ENCODE measurements at regions of chr1 and their contacts with region 1.

Region 1: DNA sequence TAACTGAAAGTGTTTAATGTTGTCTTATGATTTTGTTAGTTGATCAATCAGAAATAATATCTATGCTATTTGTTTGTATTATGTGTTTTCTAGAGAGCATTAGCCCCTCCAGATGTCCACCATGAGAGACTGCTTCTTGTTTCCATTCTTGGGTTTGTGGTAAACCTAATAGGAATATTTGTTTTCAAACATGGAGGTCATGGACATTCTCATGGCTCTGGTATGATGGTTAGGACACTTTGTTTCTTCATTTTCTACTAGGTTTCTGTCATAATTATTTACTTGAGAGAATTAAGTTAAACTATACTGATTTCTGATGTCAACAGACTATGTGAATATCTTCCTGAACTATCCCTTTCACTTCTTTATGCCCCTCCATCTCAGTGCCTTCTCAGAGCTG is 16.1 kb downstream of the SLC30A7 start:
- DNase-seq: no peak
- H3K4me3 ChIP-seq: no peak overlapping the region
- H3K27ac ChIP-seq: no peak overlapping the region
- H3K4me1 ChIP-seq: peaks cover 0 to 4% (median 0%) of the 10 kb centered on the region in 4 donors
- H3K27me3 ChIP-seq: no peaks in the 10 kb centered on the region
- CTCF ChIP-seq: no peak
- EP300 ChIP-seq: no peak
- POLR2A ChIP-seq: no peak

Region 2: GRCh38 chr1:100671601-100672000 is 240.4 kb before region 1 on chr1:
- intact Hi-C with region 1: no loop called
- DNase-seq: no peak
- H3K4me3 ChIP-seq: no peak overlapping the region
- H3K27ac ChIP-seq: no peak overlapping the region
- H3K4me1 ChIP-seq: no peaks in the 10 kb centered on the region
- H3K27me3 ChIP-seq: no peaks in the 10 kb centered on the region
- CTCF ChIP-seq: no peak
- EP300 ChIP-seq: no peak
- POLR2A ChIP-seq: no peak

Region 3: DNA sequence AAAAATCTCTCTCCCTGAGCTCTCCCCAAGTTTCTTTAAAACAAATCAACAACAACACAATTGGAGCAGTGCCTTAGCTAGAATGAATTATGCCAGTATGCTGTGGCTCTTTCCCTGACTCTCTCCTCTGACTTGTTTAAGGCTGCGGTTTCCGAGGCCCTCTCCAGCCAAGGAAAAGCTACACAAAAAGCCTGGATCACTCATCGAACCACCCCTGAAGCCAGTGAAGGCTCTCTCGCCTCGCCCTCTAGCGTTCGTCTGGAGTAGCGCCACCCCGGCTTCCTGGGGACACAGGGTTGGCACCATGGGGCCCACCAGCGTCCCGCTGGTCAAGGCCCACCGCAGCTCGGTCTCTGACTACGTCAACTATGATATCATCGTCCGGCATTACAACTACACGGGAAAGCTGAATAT is 326.7 kb after region 1 on chr1:
- intact Hi-C with region 1: loop called (anchors 10 kb)
- DNase-seq: peak; percentile 84 to 91
- H3K4me3 ChIP-seq: peak overlapping the region; percentile 54 to 67 (median 60)
- H3K27ac ChIP-seq: peak overlapping the region in 4 of 5 donors; percentile 52 to 84 (median 68)
- H3K4me1 ChIP-seq: peaks cover 14 to 37% (median 34%) of the 10 kb centered on the region in 4 donors
- H3K27me3 ChIP-seq: peaks cover 0 to 34% (median 16%) of the 10 kb centered on the region in 3 donors
- CTCF ChIP-seq: peak in 5 of 7 experiments; percentile 79 to 92 (median 88)
- EP300 ChIP-seq: no peak
- POLR2A ChIP-seq: no peak

Region 4: DNA sequence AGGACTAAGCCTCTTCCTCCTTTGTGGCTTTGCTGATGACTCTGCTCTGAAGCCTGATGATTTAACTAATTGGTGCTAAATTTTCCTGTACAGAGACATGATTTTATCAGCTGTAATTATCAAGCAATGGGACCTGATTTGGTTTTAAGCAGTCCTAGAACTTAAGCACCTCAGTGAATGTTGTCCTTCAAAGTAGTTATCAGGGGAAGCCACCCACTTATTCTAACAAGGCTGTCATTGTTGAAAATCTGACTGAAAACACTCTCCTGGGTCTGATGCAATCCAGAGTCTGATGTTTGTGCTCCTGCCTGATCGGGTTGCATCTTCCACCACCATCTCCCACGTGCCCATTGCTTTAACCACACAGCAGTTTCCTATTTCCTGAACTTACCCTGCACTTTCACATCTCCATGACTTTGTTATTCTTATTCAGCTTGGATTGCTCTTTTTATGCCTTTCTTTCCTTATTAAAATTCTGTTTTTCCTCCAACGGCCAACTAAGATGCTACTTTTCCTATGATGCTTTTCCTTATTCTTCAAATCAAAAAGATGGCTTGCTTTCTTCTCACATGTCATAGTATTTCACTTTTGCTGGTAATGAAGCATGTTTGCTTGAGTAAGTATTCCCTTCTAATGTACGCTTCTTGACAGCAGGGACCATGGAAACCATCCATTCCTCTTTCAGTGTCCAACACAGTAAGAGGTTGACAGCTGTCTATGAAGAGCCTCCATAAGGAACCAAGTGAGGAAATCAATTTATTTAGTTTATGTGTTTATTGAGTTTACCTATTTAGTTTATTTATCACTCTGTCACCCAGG is 379.8 kb after region 1 on chr1:
- intact Hi-C with region 1: loop called (anchors 10 kb)
- DNase-seq: peak in 1 of 2 donors; percentile 52
- H3K4me3 ChIP-seq: no peak overlapping the region
- H3K27ac ChIP-seq: no peak overlapping the region
- H3K4me1 ChIP-seq: peaks cover 0 to 13% (median 2%) of the 10 kb centered on the region in 4 donors
- H3K27me3 ChIP-seq: peaks cover 0 to 6% (median 0%) of the 10 kb centered on the region in 3 donors
- CTCF ChIP-seq: no peak
- EP300 ChIP-seq: no peak
- POLR2A ChIP-seq: no peak